Posterior vena cava (tissue), 2 donors: ENCODE measurements at regions of chr12 and their contacts with region 1.

Region 1: DNA sequence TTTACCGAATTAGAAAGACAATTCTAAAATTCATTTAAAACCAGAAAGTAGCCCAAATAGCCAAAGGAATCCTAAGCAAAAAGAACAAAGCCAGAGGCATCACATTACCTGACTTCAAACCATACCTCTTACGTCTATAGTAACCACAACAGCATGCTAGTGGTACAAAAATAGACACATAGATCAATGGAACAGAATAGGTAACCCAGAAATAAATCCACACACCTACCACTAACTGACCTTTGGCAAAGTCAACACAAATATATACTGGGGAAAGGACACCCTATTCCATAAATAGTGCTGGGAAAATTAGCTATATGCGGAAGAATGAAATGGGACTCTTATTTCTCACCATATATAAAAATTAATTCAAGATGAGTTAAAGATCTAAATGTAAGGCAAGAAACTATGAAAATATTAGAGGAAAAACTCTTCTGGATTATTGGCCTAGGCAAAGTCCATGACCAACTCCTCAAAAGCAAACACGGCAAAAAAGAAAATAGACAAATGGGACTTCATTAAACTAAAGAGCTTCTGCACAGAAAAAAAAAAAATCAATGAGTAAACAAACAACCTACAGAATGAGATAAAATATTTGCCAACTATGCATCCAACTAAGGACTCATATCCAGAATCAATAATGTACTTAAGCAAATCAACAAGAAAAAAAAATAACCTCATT is 568.9 kb downstream of the SOX5 start:
- DNase-seq: no peak

Region 2: DNA sequence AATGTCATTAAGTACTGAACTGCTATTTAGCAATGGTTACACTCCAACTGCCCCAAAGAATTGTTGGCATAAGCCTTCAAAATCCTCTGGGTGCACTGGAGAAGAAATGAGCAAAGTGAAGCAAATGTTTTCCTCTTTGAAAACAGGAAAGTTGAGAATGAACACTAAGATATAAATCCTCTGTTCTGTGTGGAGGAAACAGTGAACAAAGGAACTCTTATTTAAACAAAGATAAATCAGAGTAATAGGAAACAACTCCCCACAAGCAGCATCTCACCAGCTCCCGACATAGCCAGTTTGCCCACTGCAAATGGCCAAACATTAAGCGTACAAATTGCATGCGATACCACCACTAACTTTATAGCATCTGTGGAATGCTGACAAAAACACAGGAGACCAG is 1514.3 kb after region 1 on chr12:
- intact Hi-C with region 1: loop called in 1 of 2 experiments (anchors 5 kb)
- DNase-seq: no peak